Activated naive CD4-positive, alpha-beta T cell treated with anti-CD3 and anti-CD28 coated beads for 36 hours (primary cell): ENCODE measurements at regions of chr7 and their contacts with region 1.

Region 1: DNA sequence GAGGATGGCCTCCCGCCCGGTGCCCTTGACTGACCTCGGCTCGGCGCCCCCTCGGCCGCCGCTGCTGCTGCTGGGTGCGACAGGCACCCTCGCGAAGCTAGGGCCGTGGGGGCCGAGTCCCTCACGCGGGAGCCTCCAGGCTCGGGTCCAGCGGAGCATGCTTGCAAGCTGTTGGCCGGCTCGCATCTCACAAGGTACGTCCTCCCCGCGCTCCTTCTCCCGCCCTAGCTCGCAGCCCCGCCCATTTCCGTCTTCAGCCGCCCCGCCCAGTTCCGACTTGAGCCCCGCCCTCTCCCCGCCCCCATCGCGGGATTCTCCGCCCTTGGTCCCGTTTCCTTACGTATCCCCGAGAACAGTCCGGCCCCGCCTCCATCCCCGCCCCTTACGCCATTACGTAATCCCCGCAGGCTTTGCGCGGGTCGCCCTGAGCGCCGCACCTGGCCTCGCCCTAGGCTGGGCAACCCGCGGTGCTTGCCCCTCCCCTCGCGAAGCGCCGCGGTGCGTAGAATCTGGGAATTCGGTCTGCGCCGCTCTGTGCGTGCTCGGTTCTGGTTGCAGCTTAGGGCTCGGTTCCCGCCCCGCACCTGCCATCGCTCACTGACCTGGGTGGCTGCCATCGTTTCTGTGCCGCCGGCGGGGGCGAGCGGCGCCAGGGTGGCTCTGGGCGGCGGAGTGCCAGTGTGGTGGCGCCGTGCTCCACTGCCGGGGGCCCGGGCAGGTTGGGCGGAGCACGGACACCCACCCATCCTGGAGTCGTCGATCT is at the start of gene ABHD11:
- DNase-seq: peak; percentile 98
- H3K4me3 Mint-ChIP-seq: peak within 1 kb of the TSS; percentile 97
- H3K27ac Mint-ChIP-seq: peak within 1 kb of the TSS; percentile 90
- H3K4me1 Mint-ChIP-seq: peaks cover 14% of the 10 kb centered on the region
- H3K27me3 Mint-ChIP-seq: no peaks in the 10 kb centered on the region
- total RNA-seq, gene ABHD11: 9.4 to 11.3 TPM

Region 2: GRCh38 chr7:73342645-73343044 is 396.1 kb before region 1 on chr7:
- CTCF ChIA-PET with region 1: no interaction called
- intact Hi-C with region 1: no loop called
- DNase-seq: no peak
- H3K4me3 Mint-ChIP-seq: no peak overlapping the region
- H3K27ac Mint-ChIP-seq: no peak overlapping the region
- H3K4me1 Mint-ChIP-seq: no peaks in the 10 kb centered on the region
- H3K27me3 Mint-ChIP-seq: no peaks in the 10 kb centered on the region

Region 3: DNA sequence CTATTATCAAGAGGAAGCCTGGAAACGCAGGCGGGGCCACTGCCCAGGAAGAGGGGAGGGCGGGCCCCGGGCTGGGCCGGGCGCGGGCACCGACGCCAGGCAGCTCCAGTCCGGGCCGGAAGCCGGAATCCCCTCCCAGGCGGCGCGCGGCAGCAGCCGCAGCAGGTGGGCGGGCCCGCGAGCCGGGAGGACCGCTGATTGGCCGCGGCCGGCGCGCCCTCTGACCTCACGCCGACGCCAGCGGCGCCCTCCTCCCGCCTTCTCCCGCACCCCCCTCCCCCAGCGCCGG is 181.7 kb before region 1 on chr7:
- CTCF ChIA-PET with region 1: no interaction called
- intact Hi-C with region 1: loop called (anchors 1 kb)
- DNase-seq: peak; percentile 92
- H3K4me3 Mint-ChIP-seq: peak overlapping the region; percentile 86
- H3K27ac Mint-ChIP-seq: peak overlapping the region; percentile 89
- H3K4me1 Mint-ChIP-seq: peaks cover 41% of the 10 kb centered on the region
- H3K27me3 Mint-ChIP-seq: no peaks in the 10 kb centered on the region

Region 4: GRCh38 chr7:73606801-73607691 is 131.7 kb before region 1 on chr7:
- CTCF ChIA-PET with region 1: interaction called, 36 read pairs
- intact Hi-C with region 1: loop called (anchors 1 kb)
- DNase-seq: peak; percentile 63
- H3K4me3 Mint-ChIP-seq: no peak overlapping the region
- H3K27ac Mint-ChIP-seq: no peak overlapping the region
- H3K4me1 Mint-ChIP-seq: no peaks in the 10 kb centered on the region
- H3K27me3 Mint-ChIP-seq: peaks cover 6% of the 10 kb centered on the region

Region 5: GRCh38 chr7:73683056-73683964 is 55.5 kb before region 1 on chr7 and contains the starts of genes BUD23 and DNAJC30:
- CTCF ChIA-PET with region 1: no interaction called
- intact Hi-C with region 1: loop called (anchors 1 kb)
- DNase-seq: peak; percentile 99
- H3K4me3 Mint-ChIP-seq: peak within 1 kb of the TSS; percentile 98
- H3K27ac Mint-ChIP-seq: peak within 1 kb of the TSS; percentile 91
- H3K4me1 Mint-ChIP-seq: peaks cover 47% of the 10 kb centered on the region
- H3K27me3 Mint-ChIP-seq: no peaks in the 10 kb centered on the region
- total RNA-seq, gene BUD23: 95.1 to 110 TPM
- total RNA-seq, gene DNAJC30: 4.2 to 4.4 TPM

Region 6: GRCh38 chr7:73842247-73842895 is 103.6 kb after region 1 on chr7 and contains the start of gene METTL27:
- CTCF ChIA-PET with region 1: no interaction called
- intact Hi-C with region 1: loop called (anchors 2 kb)
- DNase-seq: peak; percentile 95
- H3K4me3 Mint-ChIP-seq: peak within 1 kb of the TSS; percentile 80
- H3K27ac Mint-ChIP-seq: peak within 1 kb of the TSS; percentile 50
- H3K4me1 Mint-ChIP-seq: peaks cover 5% of the 10 kb centered on the region
- H3K27me3 Mint-ChIP-seq: no peaks in the 10 kb centered on the region
- total RNA-seq, gene METTL27: 1.7 to 2.2 TPM

Region 7: GRCh38 chr7:74026903-74027551 is 288.2 kb after region 1 on chr7:
- CTCF ChIA-PET with region 1: no interaction called
- intact Hi-C with region 1: loop called (anchors 5 kb)
- DNase-seq: peak; percentile 76
- H3K4me3 Mint-ChIP-seq: no peak overlapping the region
- H3K27ac Mint-ChIP-seq: no peak overlapping the region
- H3K4me1 Mint-ChIP-seq: peaks cover 14% of the 10 kb centered on the region
- H3K27me3 Mint-ChIP-seq: peaks cover 55% of the 10 kb centered on the region